PC-3 (cell line): ENCODE measurements at regions of chr21 and their contacts with region 1.

Region 1: GRCh38 chr21:42973991-42974831 is at the start of gene PKNOX1:
- DNase-seq: peak; percentile 99
- ATAC-seq: peak; percentile 90
- H3K4me3 ChIP-seq: peak within 1 kb of the TSS; percentile 80
- H3K27ac ChIP-seq: peak within 1 kb of the TSS; percentile 40
- H3K4me1 ChIP-seq: peaks cover 16% of the 10 kb centered on the region
- H3K27me3 ChIP-seq: no peaks in the 10 kb centered on the region
- CTCF ChIP-seq: no peak
- total RNA-seq, gene PKNOX1: 14.9 and 19.7 TPM in 2 replicates

Region 2: DNA sequence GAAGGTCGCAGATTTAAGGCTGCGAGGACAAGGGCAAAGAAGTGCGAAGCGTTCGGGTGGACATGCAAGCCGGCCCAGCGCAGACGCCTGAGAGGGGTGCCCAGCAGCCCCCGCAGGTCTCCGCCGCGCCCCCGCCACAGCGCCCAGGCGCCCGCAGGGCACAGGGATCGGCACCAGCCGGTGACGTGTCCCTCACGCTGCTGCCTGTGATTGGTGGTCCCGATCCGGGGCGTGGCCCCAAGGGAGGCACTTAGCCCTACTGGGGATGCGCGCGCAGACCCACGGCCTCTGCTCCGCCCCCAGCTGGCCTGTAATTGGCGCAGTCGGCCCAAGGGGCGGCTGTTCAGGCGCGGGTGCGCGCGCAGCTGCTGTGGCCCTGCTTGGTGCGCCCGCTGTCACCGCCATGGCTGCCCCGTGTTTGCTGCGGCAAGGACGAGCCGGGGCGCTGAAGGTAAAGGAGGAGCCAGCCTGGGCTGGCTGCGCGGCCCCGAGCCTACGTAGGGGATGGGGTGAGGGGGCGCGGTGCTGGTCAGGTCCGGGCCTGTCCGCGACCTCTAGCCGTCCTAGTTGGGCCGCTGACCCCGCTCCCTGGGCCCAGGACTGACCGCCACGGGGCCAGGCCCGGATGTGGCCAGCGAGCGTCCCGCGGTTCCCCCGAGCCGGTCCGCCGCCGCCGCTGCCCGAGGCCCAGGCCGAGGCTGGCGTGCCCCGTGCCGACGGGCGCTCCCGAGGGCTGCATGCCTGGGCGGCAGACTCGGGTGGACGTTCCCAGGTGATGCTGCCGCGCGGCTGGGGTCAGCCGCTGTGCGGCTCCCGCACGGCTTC is 81.1 kb before region 1 on chr21 and contains the start of gene NDUFV3:
- CTCF ChIA-PET with region 1: interaction called, 5 read pairs
- POLR2A ChIA-PET with region 1: interaction called, 4 read pairs
- intact Hi-C with region 1: loop called (anchors 10 kb)
- DNase-seq: peak; percentile 99
- ATAC-seq: peak; percentile 93
- H3K4me3 ChIP-seq: peak within 1 kb of the TSS; percentile 99
- H3K27ac ChIP-seq: peak within 1 kb of the TSS; percentile 75
- H3K4me1 ChIP-seq: peaks cover 7% of the 10 kb centered on the region
- H3K27me3 ChIP-seq: no peaks in the 10 kb centered on the region
- CTCF ChIP-seq: no peak
- total RNA-seq, gene NDUFV3: 61.6 and 65.8 TPM in 2 replicates

Region 3: DNA sequence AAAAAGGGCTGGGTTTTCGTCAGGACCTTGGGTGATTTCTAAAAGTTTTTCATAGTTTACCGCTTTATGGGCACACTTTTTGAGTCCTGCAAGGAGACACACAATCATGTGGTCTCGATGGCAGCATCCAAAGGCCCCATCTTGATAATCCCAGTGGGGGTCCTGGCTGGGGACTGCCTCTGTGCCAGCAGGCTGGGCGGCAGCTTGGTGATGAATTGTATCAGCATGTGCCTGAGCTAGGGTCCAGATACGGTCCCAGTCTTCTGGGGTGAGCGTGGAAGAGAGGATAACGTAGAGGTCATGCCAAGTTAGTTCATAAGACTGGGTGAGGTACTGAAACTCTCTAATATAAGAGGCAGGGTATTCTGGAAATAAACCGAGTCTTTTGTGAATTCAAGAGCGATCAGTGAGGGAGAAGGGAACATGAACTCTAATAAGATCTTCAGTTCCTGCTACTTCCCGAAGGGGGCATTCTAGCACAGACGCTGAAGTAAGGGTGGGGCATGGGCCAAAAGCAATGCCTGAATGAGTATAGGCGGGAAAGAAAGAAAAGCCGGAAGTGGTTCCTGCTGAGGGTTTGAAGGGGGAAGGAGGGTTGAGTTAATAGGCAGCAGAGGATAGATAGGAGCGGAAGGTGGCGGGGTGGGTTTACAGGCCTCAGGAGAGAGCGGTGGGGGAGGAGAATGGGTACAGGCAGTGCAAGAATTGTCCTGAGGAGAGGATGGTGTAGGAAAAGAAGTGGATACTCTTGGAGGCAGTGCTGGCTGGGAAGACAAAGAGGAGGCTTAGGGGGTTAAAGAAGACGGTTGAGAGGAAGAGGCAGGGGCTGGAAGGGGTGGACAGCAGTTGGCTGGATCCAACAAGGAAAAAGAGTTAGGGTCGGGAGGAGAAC is 50.4 kb before region 1 on chr21:
- CTCF ChIA-PET with region 1: no interaction called
- POLR2A ChIA-PET with region 1: no interaction called
- intact Hi-C with region 1: loop called (anchors 10 kb)
- DNase-seq: peak; percentile 96
- ATAC-seq: peak; percentile 95
- H3K4me3 ChIP-seq: no peak overlapping the region
- H3K27ac ChIP-seq: no peak overlapping the region
- H3K4me1 ChIP-seq: peaks cover 8% of the 10 kb centered on the region
- H3K27me3 ChIP-seq: no peaks in the 10 kb centered on the region
- CTCF ChIP-seq: peak; percentile 88

Region 4: DNA sequence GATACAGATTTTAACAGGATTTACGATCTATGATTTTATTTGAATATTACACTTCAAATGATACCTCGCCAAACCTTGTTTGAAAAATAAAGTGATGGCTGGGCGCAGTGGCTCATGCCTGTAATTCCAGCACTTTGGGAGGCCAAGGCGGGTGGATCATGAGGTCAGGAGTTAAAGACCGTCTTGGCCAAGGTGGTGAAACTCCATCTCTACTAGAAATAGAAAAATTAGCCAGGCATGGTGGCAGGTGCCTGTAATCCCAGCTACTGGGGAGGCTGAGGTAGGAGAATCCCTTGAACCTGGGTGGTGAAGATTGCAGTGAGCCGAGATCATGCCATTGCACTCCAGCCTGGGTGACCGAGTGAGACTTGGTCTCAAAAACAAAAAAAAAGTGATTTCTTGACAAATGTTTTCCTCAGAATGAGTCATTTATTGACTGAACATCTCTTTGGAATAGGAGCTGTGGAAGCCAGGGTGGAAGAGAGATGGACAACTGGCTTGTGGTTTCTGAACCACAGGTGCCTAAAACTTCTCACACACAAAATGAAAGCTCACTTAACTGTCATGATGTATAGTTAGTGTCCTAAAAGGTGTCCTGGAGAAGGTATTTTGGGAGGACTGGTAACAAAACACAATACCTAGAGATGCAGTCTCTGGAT is 12.0 kb after region 1 on chr21:
- CTCF ChIA-PET with region 1: no interaction called
- POLR2A ChIA-PET with region 1: interaction called, 12 read pairs
- intact Hi-C with region 1: no loop called
- DNase-seq: peak; percentile 65
- ATAC-seq: peak; percentile 81
- H3K4me3 ChIP-seq: no peak overlapping the region
- H3K27ac ChIP-seq: peak overlapping the region; percentile 21; the same call in 1 of the 2 replicates
- H3K4me1 ChIP-seq: peaks cover 18% of the 10 kb centered on the region
- H3K27me3 ChIP-seq: no peaks in the 10 kb centered on the region
- CTCF ChIP-seq: no peak